B cell (primary cell): ENCODE measurements at regions of chr14 and their contacts with region 1.

Region 1: DNA sequence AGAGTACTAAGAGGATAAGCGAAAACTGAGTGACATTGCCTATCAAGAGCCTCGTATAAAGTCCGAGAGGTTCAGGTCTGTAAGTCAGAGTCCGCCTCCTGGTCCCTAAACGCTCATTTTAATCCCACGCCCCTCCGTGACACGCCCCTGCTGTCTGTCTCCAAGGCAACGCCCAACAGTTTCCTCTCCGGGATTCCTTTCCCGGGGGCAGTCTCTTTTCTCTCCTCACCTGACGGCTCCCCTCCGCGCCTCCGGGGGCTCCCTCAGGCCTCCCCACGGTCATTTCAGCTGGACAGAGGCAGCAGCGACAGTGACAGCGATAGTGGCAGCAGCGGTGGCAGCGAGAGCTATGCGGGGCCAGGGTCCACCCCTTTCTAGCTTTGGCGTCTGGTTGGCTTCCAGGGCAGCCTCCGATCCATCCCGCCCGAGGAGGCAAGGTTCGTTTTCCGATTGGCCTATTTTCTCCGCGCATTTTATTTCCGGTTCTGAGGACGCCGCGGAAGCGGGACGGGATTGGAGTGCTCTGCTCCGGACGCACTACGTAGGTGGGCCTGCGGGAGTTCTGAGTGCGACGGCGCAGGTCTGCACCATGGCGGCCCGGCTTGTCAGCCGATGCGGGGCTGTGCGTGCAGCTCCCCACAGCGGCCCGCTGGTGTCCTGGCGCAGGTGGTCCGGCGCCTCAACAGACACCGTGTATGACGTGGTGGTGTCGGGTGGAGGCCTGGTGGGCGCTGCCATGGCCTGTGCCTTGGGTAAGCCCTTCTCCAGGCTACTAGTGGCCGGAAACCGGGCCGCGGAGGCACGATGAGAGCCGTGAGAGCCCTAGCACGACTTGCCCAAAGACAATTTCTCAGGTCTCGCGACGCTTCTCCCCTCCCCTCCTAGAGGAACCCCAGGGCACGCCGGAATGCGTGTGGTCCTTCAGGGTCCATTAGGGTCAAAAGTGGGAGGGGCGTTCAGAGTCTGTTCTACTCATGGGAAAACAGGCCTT is at the starts of genes COQ6 and FAM161B:
- DNase-seq: peak; percentile 96
- ATAC-seq: peak; percentile 93
- H3K4me3 ChIP-seq: peak within 1 kb of the TSS; percentile 63 to 94 (median 89)
- H3K4me3 Mint-ChIP-seq: peak within 1 kb of the TSS; percentile 100
- H3K27ac ChIP-seq: peak within 1 kb of the TSS; percentile 78 to 96
- H3K27ac Mint-ChIP-seq: peak within 1 kb of the TSS; percentile 95
- H3K4me1 ChIP-seq: peaks cover 11 to 12% of the 10 kb centered on the region in 2 donors
- H3K4me1 Mint-ChIP-seq: peaks cover 20% of the 10 kb centered on the region
- H3K27me3 ChIP-seq: no peaks in the 10 kb centered on the region
- H3K27me3 Mint-ChIP-seq: no peaks in the 10 kb centered on the region
- CTCF ChIP-seq: peak; percentile 11
- total RNA-seq, gene COQ6: 34.1 and 38.2 TPM in 2 replicates
- total RNA-seq, gene FAM161B: 5.9 and 6.4 TPM in 2 replicates

Region 2: GRCh38 chr14:73627151-73627558 is 322.9 kb before region 1 on chr14:
- CTCF ChIA-PET with region 1: no interaction called
- POLR2A ChIA-PET with region 1: interaction called, 10 read pairs
- intact Hi-C with region 1: no loop called
- DNase-seq: no peak
- ATAC-seq: no peak
- H3K4me3 ChIP-seq: no peak overlapping the region
- H3K4me3 Mint-ChIP-seq: no peak overlapping the region
- H3K27ac ChIP-seq: no peak overlapping the region
- H3K27ac Mint-ChIP-seq: no peak overlapping the region
- H3K4me1 ChIP-seq: no peaks in the 10 kb centered on the region
- H3K4me1 Mint-ChIP-seq: no peaks in the 10 kb centered on the region
- H3K27me3 ChIP-seq: no peaks in the 10 kb centered on the region
- H3K27me3 Mint-ChIP-seq: peaks cover 21% of the 10 kb centered on the region
- CTCF ChIP-seq: no peak

Region 3: GRCh38 chr14:73903028-73903427 is 47.0 kb before region 1 on chr14:
- CTCF ChIA-PET with region 1: no interaction called
- POLR2A ChIA-PET with region 1: no interaction called
- intact Hi-C with region 1: no loop called
- DNase-seq: no peak
- ATAC-seq: no peak
- H3K4me3 ChIP-seq: no peak overlapping the region
- H3K4me3 Mint-ChIP-seq: no peak overlapping the region
- H3K27ac ChIP-seq: no peak overlapping the region
- H3K27ac Mint-ChIP-seq: no peak overlapping the region
- H3K4me1 ChIP-seq: no peaks in the 10 kb centered on the region
- H3K4me1 Mint-ChIP-seq: no peaks in the 10 kb centered on the region
- H3K27me3 ChIP-seq: no peaks in the 10 kb centered on the region
- H3K27me3 Mint-ChIP-seq: no peaks in the 10 kb centered on the region
- CTCF ChIP-seq: no peak

Region 4: GRCh38 chr14:73916324-73916723 is 33.7 kb before region 1 on chr14:
- CTCF ChIA-PET with region 1: no interaction called
- POLR2A ChIA-PET with region 1: no interaction called
- intact Hi-C with region 1: no loop called
- DNase-seq: no peak
- ATAC-seq: no peak
- H3K4me3 ChIP-seq: no peak overlapping the region
- H3K4me3 Mint-ChIP-seq: no peak overlapping the region
- H3K27ac ChIP-seq: no peak overlapping the region
- H3K27ac Mint-ChIP-seq: no peak overlapping the region
- H3K4me1 ChIP-seq: no peaks in the 10 kb centered on the region
- H3K4me1 Mint-ChIP-seq: no peaks in the 10 kb centered on the region
- H3K27me3 ChIP-seq: no peaks in the 10 kb centered on the region
- H3K27me3 Mint-ChIP-seq: no peaks in the 10 kb centered on the region
- CTCF ChIP-seq: no peak

Region 5: DNA sequence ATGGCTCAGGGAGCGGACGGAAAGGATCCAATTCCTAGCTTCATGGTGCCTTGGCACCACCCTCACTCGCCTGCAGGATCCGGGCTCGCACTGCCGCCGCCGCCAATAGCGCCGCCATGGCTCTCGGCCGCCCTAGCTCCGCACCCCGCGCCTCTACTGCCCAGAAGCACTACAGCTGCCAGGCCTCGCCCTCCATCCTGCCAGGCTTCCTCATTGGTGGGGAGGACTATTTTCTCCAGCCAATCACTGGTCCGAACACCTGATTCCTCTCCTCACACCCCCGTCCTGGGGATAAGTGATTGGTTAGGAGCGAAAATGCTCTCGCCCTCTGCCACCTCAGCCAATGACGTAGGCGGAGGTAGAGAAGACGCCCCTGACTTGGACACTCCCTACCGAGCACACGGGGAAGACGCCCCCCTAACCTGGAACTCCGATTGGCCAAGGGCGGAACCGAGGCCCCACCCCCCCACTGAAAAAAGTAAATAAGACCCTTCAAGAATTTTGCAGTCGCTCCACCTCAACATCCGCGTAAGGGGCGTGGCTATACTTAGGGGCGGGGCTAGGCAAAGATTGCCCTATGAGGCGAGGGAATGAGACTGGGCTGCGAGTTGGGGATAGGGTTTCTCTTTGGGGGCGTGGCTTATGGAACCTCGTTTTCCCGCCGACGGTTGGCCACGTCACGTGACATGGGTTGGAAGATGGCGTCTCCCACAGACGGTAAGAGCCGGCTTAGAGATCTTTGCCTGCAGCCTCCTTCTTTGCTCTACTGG is 134.4 kb after region 1 on chr14 and contains the starts of genes ALDH6A1 and LIN52:
- CTCF ChIA-PET with region 1: no interaction called
- POLR2A ChIA-PET with region 1: no interaction called
- intact Hi-C with region 1: loop called (anchors 1 kb)
- DNase-seq: peak; percentile 100
- ATAC-seq: peak; percentile 85
- H3K4me3 ChIP-seq: peak within 1 kb of the TSS; percentile 75 to 79 (median 77)
- H3K4me3 Mint-ChIP-seq: peak within 1 kb of the TSS; percentile 95
- H3K27ac ChIP-seq: peak within 1 kb of the TSS; percentile 34 to 79
- H3K27ac Mint-ChIP-seq: peak within 1 kb of the TSS; percentile 88
- H3K4me1 ChIP-seq: peaks cover 23 to 24% of the 10 kb centered on the region in 2 donors
- H3K4me1 Mint-ChIP-seq: peaks cover 35% of the 10 kb centered on the region
- H3K27me3 ChIP-seq: no peaks in the 10 kb centered on the region
- H3K27me3 Mint-ChIP-seq: no peaks in the 10 kb centered on the region
- CTCF ChIP-seq: no peak
- total RNA-seq, gene ALDH6A1: 14.9 and 16.7 TPM in 2 replicates
- total RNA-seq, gene LIN52: 13.1 and 15.5 TPM in 2 replicates